ENCODE measurements at regions of chr15 and their contacts with region 1.

Region 1: GRCh38 chr15:38084289-38084688 is 149.8 kb downstream of the TMCO5A start:
- DNase-seq: no peak
- ATAC-seq: peak; percentile 41
- H3K4me3 Mint-ChIP-seq: no peak overlapping the region
- H3K27ac Mint-ChIP-seq: peak overlapping the region; percentile 12
- H3K4me1 Mint-ChIP-seq: peaks cover 27% of the 10 kb centered on the region
- H3K27me3 Mint-ChIP-seq: peaks cover 4% of the 10 kb centered on the region
- CTCF ChIP-seq: no peak

Region 2: GRCh38 chr15:37045859-37046740 is 1038.2 kb before region 1 on chr15:
- CTCF ChIA-PET with region 1: no interaction called
- POLR2A ChIA-PET with region 1: no interaction called
- intact Hi-C with region 1: no loop called
- DNase-seq: no peak
- ATAC-seq: no peak
- H3K4me3 Mint-ChIP-seq: no peak overlapping the region
- H3K27ac Mint-ChIP-seq: no peak overlapping the region
- H3K4me1 Mint-ChIP-seq: no peaks in the 10 kb centered on the region
- H3K27me3 Mint-ChIP-seq: no peaks in the 10 kb centered on the region
- CTCF ChIP-seq: no peak

Region 3: GRCh38 chr15:38059665-38060064 is 24.6 kb before region 1 on chr15:
- CTCF ChIA-PET with region 1: no interaction called
- POLR2A ChIA-PET with region 1: no interaction called
- intact Hi-C with region 1: no loop called
- DNase-seq: no peak
- ATAC-seq: no peak
- H3K4me3 Mint-ChIP-seq: no peak overlapping the region
- H3K27ac Mint-ChIP-seq: no peak overlapping the region
- H3K4me1 Mint-ChIP-seq: peaks cover 2% of the 10 kb centered on the region
- H3K27me3 Mint-ChIP-seq: peaks cover 6% of the 10 kb centered on the region
- CTCF ChIP-seq: no peak

Region 4: DNA sequence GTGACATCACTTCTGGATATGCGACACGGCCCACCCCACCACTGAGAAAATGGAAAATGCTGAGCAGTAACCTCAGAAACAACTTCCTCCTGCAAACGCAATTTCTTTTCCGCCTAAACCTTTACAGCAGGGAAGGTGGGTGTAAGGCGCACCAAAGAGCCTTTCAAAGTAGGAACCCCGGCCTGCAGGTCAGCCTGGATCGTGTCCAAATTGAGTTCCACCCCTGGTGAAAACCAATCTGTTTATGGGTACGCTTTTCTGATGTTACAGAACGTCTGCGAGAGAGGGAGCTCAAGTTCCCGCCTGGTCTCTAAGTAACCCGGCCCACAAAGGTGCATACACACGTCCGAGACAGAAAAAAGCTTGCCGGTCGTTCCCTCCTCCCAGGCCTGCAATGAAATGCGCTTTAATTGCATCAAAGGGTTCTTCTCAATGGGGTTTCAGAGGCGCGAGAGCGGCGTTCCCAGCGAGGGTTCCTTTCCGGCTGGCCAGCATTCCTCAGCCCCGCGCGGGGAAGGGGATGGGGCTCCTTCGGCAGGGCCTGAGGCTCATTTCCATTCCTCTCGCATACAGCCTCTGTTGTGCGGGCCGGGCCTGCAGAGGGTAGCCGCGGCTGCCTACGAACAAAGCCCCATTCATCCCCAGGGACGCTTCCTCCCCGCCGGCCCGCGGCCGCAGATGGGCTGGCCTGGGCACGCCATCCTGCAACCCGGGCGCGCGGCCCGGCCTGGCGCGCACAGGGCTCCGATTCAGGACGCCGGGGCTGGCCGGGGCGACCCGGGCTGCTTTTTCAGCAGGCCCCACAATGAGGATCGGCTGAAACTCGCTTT is 11.7 kb before region 1 on chr15:
- CTCF ChIA-PET with region 1: no interaction called
- POLR2A ChIA-PET with region 1: interaction called, 6 read pairs
- intact Hi-C with region 1: loop called (anchors 1 kb)
- DNase-seq: peak; percentile 37
- ATAC-seq: peak; percentile 63
- H3K4me3 Mint-ChIP-seq: peak overlapping the region; percentile 86
- H3K27ac Mint-ChIP-seq: peak overlapping the region; percentile 63
- H3K4me1 Mint-ChIP-seq: peaks cover 60% of the 10 kb centered on the region
- H3K27me3 Mint-ChIP-seq: peaks cover 11% of the 10 kb centered on the region
- CTCF ChIP-seq: no peak

Region 5: GRCh38 chr15:38263251-38263650 is 179.0 kb after region 1 on chr15:
- CTCF ChIA-PET with region 1: no interaction called
- POLR2A ChIA-PET with region 1: no interaction called
- intact Hi-C with region 1: no loop called
- DNase-seq: no peak
- ATAC-seq: no peak
- H3K4me3 Mint-ChIP-seq: no peak overlapping the region
- H3K27ac Mint-ChIP-seq: no peak overlapping the region
- H3K4me1 Mint-ChIP-seq: no peaks in the 10 kb centered on the region
- H3K27me3 Mint-ChIP-seq: no peaks in the 10 kb centered on the region
- CTCF ChIP-seq: no peak

Measured in activated B cell treated with CpG ODN at 0.5 μM for 24 hours (primary cell).